ENCODE measurements at regions of chr5 and their contacts with region 1.

Region 1: GRCh38 chr5:135426102-135427082 is 20.8 kb downstream of the DCANP1 start:
- DNase-seq: no peak
- H3K4me3 ChIP-seq: no peak overlapping the region
- H3K27ac ChIP-seq: no peak overlapping the region
- H3K4me1 ChIP-seq: no peaks in the 10 kb centered on the region
- H3K27me3 ChIP-seq: no peaks in the 10 kb centered on the region
- CTCF ChIP-seq: peak in 2 of 3 experiments; percentile 58 to 78; a peak in 3 of 4 replicates
- EP300 ChIP-seq: no peak
- POLR2A ChIP-seq: no peak
- RAD21 ChIP-seq: peak; percentile 57 to 68

Region 2: DNA sequence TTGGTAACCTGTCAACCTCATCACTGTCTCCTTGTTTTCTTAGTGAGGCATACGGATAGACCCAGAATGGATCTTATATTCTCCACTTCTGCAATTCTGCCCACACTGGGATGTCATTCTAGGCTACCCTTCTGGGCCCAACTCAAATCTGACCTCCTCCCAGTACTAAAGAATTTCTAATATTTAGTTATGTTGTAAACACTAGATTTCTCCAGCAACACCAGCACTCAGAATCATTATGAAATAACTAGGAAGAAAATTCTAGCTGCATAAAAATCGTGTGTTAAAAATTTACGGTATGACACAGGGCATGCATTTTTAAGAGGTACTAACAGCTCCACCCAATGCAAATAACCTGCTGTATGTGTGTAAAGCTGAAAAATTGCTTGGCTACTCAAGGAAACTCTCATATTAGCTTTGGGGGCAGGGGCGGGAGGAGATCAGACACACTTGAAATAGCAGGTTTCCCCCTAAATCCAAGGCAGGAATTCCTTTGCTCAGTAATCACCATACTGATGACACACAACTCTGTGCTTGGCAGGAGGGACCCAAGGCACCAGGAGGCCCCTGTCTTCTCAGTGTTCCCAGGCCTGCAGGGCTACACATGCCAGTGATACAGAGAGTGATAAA is 54.7 kb before region 1 on chr5:
- CTCF ChIA-PET with region 1: interaction called, 14 read pairs
- POLR2A ChIA-PET with region 1: no interaction called
- DNase-seq: no peak
- H3K4me3 ChIP-seq: no peak overlapping the region
- H3K27ac ChIP-seq: no peak overlapping the region
- H3K4me1 ChIP-seq: no peaks in the 10 kb centered on the region
- H3K27me3 ChIP-seq: no peaks in the 10 kb centered on the region
- CTCF ChIP-seq: no peak
- EP300 ChIP-seq: no peak
- POLR2A ChIP-seq: no peak
- RAD21 ChIP-seq: no peak

Region 3: GRCh38 chr5:135386886-135387628 is 39.3 kb before region 1 on chr5:
- CTCF ChIA-PET with region 1: interaction called, 17 read pairs
- POLR2A ChIA-PET with region 1: no interaction called
- DNase-seq: no peak
- H3K4me3 ChIP-seq: no peak overlapping the region
- H3K27ac ChIP-seq: no peak overlapping the region
- H3K4me1 ChIP-seq: no peaks in the 10 kb centered on the region
- H3K27me3 ChIP-seq: no peaks in the 10 kb centered on the region
- CTCF ChIP-seq: no peak
- EP300 ChIP-seq: no peak
- POLR2A ChIP-seq: no peak
- RAD21 ChIP-seq: no peak

Region 4: DNA sequence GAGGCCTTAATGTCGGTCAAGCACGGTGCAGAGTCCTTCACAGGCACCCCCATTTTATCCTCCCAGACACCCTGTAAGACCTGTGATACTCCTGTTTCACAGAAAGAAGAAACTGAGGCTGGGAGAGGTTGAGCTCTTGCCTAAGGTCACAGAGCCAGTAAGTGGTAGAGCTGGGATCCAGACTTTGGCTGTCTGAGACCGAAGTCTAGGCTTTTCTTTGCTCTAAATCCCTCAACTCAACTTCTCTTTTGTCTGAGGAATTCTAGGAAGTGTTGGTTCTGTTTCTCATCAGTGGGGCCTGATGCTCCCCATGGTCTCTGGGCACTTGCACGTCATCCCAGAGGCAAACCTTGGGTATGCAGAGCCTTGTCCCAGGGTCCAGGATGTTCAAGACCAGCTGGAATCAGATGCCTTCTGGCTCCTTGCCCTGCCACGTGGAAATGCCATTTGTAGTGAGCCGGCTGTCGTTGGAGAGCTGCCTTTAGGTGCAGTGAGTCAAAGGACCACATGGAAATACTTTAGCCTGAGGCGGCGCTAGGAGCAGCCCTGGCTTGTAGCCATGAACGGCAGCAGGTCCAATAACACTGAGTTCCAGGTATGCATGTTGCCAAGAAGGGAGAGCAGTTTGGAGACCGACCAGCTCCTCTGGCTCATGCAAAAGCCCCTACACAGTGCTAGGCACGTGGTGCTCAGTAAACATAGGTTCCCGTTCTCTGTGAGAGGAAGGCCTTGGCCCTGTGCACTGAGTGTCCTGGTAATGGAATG is 11.6 kb after region 1 on chr5:
- CTCF ChIA-PET with region 1: interaction called, 62 read pairs
- POLR2A ChIA-PET with region 1: interaction called, 3 read pairs
- DNase-seq: peak in 1 of 2 experiments; percentile 41
- H3K4me3 ChIP-seq: no peak overlapping the region
- H3K27ac ChIP-seq: no peak overlapping the region
- H3K4me1 ChIP-seq: no peaks in the 10 kb centered on the region; a peak in 1 of 7 replicates
- H3K27me3 ChIP-seq: no peaks in the 10 kb centered on the region
- CTCF ChIP-seq: no peak
- EP300 ChIP-seq: no peak
- POLR2A ChIP-seq: no peak
- RAD21 ChIP-seq: no peak

Region 5: GRCh38 chr5:135457424-135458071 is 31.2 kb after region 1 on chr5:
- CTCF ChIA-PET with region 1: interaction called, 14 read pairs
- POLR2A ChIA-PET with region 1: no interaction called
- DNase-seq: peak; percentile 25 to 90
- H3K4me3 ChIP-seq: no peak overlapping the region
- H3K27ac ChIP-seq: no peak overlapping the region
- H3K4me1 ChIP-seq: no peaks in the 10 kb centered on the region
- H3K27me3 ChIP-seq: peaks cover 0 to 14% (median 4%) of the 10 kb centered on the region in 4 experiments; a peak in 4 of 7 replicates
- CTCF ChIP-seq: peak; percentile 88 to 98 (median 96)
- EP300 ChIP-seq: no peak
- POLR2A ChIP-seq: no peak
- RAD21 ChIP-seq: peak; percentile 65 to 79

Region 6: GRCh38 chr5:135671052-135671705 is 244.8 kb after region 1 on chr5:
- CTCF ChIA-PET with region 1: no interaction called
- POLR2A ChIA-PET with region 1: no interaction called
- DNase-seq: no peak
- H3K4me3 ChIP-seq: no peak overlapping the region
- H3K27ac ChIP-seq: no peak overlapping the region
- H3K4me1 ChIP-seq: no peaks in the 10 kb centered on the region
- H3K27me3 ChIP-seq: no peaks in the 10 kb centered on the region
- CTCF ChIP-seq: no peak
- EP300 ChIP-seq: no peak
- POLR2A ChIP-seq: no peak
- RAD21 ChIP-seq: no peak